ENCODE measurements at regions of chr3 and their contacts with region 1.

Region 1: GRCh38 chr3:10041034-10041433 is 14.8 kb downstream of the FANCD2 start:
- DNase-seq: no peak
- ATAC-seq: no peak
- H3K4me3 ChIP-seq: no peak overlapping the region
- H3K27ac ChIP-seq: no peak overlapping the region
- H3K4me1 ChIP-seq: no peaks in the 10 kb centered on the region
- H3K27me3 ChIP-seq: no peaks in the 10 kb centered on the region
- CTCF ChIP-seq: peak; percentile 18; the same call in 1 of the 2 replicates
- EP300 ChIP-seq: no peak
- POLR2A ChIP-seq: no peak
- RAD21 ChIP-seq: no peak

Region 2: GRCh38 chr3:11878840-11879239 is 1837.8 kb after region 1 on chr3:
- CTCF ChIA-PET with region 1: no interaction called
- POLR2A ChIA-PET with region 1: no interaction called
- in situ Hi-C with region 1: loop called (anchors 10 kb)
- intact Hi-C with region 1: no loop called
- DNase-seq: no peak
- ATAC-seq: no peak
- H3K4me3 ChIP-seq: no peak overlapping the region
- H3K27ac ChIP-seq: no peak overlapping the region
- H3K4me1 ChIP-seq: no peaks in the 10 kb centered on the region
- H3K27me3 ChIP-seq: no peaks in the 10 kb centered on the region
- CTCF ChIP-seq: no peak
- EP300 ChIP-seq: no peak
- POLR2A ChIP-seq: no peak
- RAD21 ChIP-seq: no peak

Measured in HepG2 (cell line).